ENCODE measurements at regions of chr14 and their contacts with region 1.

Region 1: GRCh38 chr14:91836119-91836881 is 31.0 kb downstream of the TC2N start:
- DNase-seq: peak; percentile 86
- ATAC-seq: peak; percentile 85
- H3K4me3 Mint-ChIP-seq: peak overlapping the region; percentile 92
- H3K27ac Mint-ChIP-seq: peak overlapping the region; percentile 77
- H3K4me1 Mint-ChIP-seq: peaks cover 46% of the 10 kb centered on the region
- H3K27me3 Mint-ChIP-seq: peaks cover 18% of the 10 kb centered on the region

Region 2: GRCh38 chr14:91866061-91866460 is 29.8 kb after region 1 on chr14:
- POLR2A ChIA-PET with region 1: interaction called, 11 read pairs
- DNase-seq: no peak
- ATAC-seq: no peak
- H3K4me3 Mint-ChIP-seq: peak overlapping the region; percentile 93
- H3K27ac Mint-ChIP-seq: peak overlapping the region; percentile 97
- H3K4me1 Mint-ChIP-seq: peaks cover 79% of the 10 kb centered on the region
- H3K27me3 Mint-ChIP-seq: no peaks in the 10 kb centered on the region

Region 3: DNA sequence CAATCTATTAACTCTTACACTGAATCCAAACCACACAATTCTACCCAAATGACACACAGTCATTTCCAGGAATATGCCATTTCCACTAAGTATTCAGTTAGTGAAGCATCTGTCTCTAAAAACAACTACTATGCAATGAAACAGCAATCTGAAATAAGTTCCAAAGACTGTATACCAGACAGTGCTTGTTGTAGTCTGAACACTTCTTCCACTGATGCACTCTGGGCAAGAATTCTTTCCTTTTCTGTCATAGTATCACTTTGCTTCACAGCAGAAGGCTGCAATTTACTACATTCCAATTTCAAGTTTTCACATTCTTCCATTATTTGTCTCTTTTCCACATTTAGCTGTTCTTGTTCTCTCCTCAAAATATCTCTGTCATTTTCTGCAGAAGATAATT is 177.7 kb after region 1 on chr14:
- POLR2A ChIA-PET with region 1: no interaction called
- DNase-seq: no peak
- ATAC-seq: no peak
- H3K4me3 Mint-ChIP-seq: no peak overlapping the region
- H3K27ac Mint-ChIP-seq: peak overlapping the region; percentile 37
- H3K4me1 Mint-ChIP-seq: peaks cover 18% of the 10 kb centered on the region
- H3K27me3 Mint-ChIP-seq: no peaks in the 10 kb centered on the region